ENCODE measurements at regions of chr14 and their contacts with region 1.

Region 1: GRCh38 chr14:61568572-61569131 is 126.7 kb upstream of the HIF1A start:
- DNase-seq: peak; percentile 88
- H3K4me3 Mint-ChIP-seq: peak overlapping the region; percentile 77
- H3K27ac Mint-ChIP-seq: peak overlapping the region; percentile 56
- H3K4me1 Mint-ChIP-seq: peaks cover 77% of the 10 kb centered on the region
- H3K27me3 Mint-ChIP-seq: peaks cover 4% of the 10 kb centered on the region

Region 2: DNA sequence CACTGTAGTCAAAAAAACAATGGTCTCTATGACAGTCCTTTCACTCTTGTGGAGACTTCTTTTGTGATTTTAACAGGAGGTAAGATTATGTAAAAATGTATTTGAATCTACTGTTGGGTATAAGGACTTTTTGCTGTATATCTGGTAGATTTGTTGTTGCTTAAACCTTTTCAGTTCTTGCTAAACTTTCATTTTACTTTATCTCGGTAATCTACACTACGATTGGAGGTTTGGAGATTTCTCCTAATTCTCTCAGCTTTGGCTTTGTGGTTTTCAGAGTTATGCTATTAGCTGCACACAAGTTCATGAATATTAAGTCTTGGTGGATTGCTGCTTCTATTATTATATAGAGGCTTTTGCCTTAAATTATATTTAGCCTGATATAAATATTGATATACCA is 10.1 kb after region 1 on chr14:
- intact Hi-C with region 1: loop called (anchors 1 kb)
- DNase-seq: no peak
- H3K4me3 Mint-ChIP-seq: peak overlapping the region; percentile 41
- H3K27ac Mint-ChIP-seq: peak overlapping the region; percentile 65
- H3K4me1 Mint-ChIP-seq: peaks cover 30% of the 10 kb centered on the region
- H3K27me3 Mint-ChIP-seq: peaks cover 9% of the 10 kb centered on the region

Region 3: GRCh38 chr14:61644834-61645233 is 76.2 kb after region 1 on chr14:
- intact Hi-C with region 1: no loop called
- DNase-seq: peak; percentile 50
- H3K4me3 Mint-ChIP-seq: no peak overlapping the region
- H3K27ac Mint-ChIP-seq: no peak overlapping the region
- H3K4me1 Mint-ChIP-seq: peaks cover 18% of the 10 kb centered on the region
- H3K27me3 Mint-ChIP-seq: no peaks in the 10 kb centered on the region